ENCODE measurements at regions of chr14 and their contacts with region 1.

Region 1: GRCh38 chr14:65866886-65867285 is 454.4 kb downstream of the FUT8 start:
- DNase-seq: no peak
- H3K4me3 Mint-ChIP-seq: no peak overlapping the region
- H3K27ac Mint-ChIP-seq: no peak overlapping the region
- H3K4me1 Mint-ChIP-seq: peaks cover 53% of the 10 kb centered on the region
- H3K27me3 Mint-ChIP-seq: no peaks in the 10 kb centered on the region

Region 2: DNA sequence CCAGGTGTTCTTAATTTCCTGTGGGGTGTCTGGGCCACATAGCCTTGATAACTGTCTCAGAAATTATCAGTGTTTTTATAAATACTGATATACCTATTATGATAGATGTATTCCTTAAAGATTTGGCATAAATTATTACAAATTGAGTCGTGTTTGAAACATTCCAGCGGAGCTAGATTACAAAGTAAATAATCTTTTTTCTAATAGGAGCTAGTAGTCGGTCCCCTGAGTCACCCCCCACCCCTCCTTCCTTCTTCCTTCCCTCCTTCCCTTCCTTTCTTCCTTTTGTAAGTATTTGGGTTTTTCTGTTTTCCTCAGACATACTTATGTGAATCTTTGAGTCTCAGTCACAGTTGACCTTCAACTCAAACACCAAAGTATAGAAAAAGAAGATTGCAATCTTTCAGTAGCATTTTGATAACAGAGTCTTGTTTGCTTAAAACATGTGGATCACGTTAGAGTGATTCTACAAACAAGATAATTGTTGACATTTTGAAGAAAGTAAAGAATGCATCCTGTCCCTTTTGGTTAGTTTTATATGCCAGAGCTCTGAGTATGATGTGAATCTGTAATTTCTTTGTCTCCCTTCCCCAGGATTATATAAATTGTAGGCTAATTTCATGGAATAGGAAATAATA is 190.4 kb before region 1 on chr14:
- CTCF ChIA-PET with region 1: no interaction called
- POLR2A ChIA-PET with region 1: no interaction called
- DNase-seq: no peak
- H3K4me3 Mint-ChIP-seq: no peak overlapping the region
- H3K27ac Mint-ChIP-seq: no peak overlapping the region
- H3K4me1 Mint-ChIP-seq: no peaks in the 10 kb centered on the region
- H3K27me3 Mint-ChIP-seq: no peaks in the 10 kb centered on the region

Region 3: GRCh38 chr14:65879248-65880009 is 12.5 kb after region 1 on chr14:
- CTCF ChIA-PET with region 1: interaction called, 8 read pairs
- POLR2A ChIA-PET with region 1: interaction called, 13 read pairs
- DNase-seq: peak; percentile 26
- H3K4me3 Mint-ChIP-seq: no peak overlapping the region
- H3K27ac Mint-ChIP-seq: peak overlapping the region; percentile 88
- H3K4me1 Mint-ChIP-seq: peaks cover 5% of the 10 kb centered on the region
- H3K27me3 Mint-ChIP-seq: no peaks in the 10 kb centered on the region